ENCODE measurements at regions of chr6 and their contacts with region 1.

Region 1: DNA sequence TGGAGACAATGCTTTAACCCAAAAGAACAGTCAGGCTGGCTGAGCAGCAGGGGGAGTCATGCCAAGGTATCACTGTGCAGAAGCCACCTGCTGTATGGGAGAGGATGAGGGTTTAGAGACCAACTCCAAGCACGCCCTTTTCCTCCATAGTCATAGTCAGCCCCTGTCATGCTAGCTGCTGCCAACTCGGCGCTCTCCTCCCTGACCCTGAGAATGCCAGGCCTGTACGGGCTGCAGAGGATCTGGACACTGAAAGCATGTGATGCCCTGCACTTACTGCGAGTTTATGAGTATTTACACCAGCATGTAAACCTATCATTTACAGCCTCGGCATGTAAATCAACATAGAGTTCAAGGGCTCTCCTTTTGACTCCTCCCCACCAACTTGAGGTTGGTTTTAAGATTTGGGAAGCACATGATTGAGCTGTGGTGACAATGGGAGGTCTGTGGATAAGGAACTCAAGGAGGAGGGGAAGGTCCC is 11.7 kb upstream of the SCUBE3 start:
- DNase-seq: no peak
- ATAC-seq: no peak
- H3K4me3 ChIP-seq: no peak overlapping the region
- H3K4me3 Mint-ChIP-seq: no peak overlapping the region
- H3K27ac ChIP-seq: no peak overlapping the region
- H3K27ac Mint-ChIP-seq: no peak overlapping the region
- H3K4me1 ChIP-seq: no peaks in the 10 kb centered on the region
- H3K4me1 Mint-ChIP-seq: no peaks in the 10 kb centered on the region
- H3K27me3 ChIP-seq: no peaks in the 10 kb centered on the region
- H3K27me3 Mint-ChIP-seq: peaks cover 38 to 58% (median 52%) of the 10 kb centered on the region in 5 donors

Region 2: DNA sequence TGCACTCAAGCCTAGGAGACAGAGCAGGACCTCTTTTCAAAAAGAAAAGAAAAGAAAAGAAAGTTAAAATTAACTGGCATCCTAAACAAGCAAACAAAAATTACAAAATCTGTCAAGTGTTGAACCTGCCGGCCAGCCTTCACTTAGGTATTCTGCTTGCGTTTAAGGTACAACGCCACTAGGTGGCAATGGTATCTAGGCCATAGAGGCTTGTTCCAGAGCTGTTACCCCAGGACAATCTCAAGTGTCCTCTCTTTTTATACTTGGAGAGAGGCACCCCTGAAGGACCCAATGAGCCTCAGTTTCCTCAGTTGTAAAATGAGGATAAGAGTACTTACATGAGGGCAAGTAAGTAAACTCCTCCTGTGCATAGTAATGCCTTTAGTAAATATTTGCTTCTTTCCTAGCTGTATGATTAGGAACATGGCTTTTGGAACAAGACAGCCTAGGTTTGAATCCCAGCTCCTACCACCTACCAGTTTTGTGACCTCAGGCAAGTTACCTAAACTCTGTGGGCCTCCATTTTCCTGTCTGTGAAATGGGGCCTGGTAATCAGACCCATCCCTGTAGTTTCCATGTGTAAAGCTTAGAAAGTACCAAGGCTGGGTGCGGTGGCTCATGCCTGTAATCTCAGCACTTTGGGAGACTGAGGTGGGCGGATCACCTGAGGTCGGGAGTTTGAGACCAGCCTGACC is 742.1 kb before region 1 on chr6:
- CTCF ChIA-PET with region 1: interaction called, 7 read pairs
- POLR2A ChIA-PET with region 1: no interaction called
- intact Hi-C with region 1: loop called in 1 of 2 experiments (anchors 1 kb)
- DNase-seq: peak in 8 of 9 donors; percentile 23 to 55 (median 50)
- ATAC-seq: peak; percentile 82
- H3K4me3 ChIP-seq: no peak overlapping the region
- H3K4me3 Mint-ChIP-seq: no peak overlapping the region
- H3K27ac ChIP-seq: no peak overlapping the region
- H3K27ac Mint-ChIP-seq: no peak overlapping the region
- H3K4me1 ChIP-seq: no peaks in the 10 kb centered on the region
- H3K4me1 Mint-ChIP-seq: peaks cover 0 to 2% (median under 1%) of the 10 kb centered on the region in 7 donors
- H3K27me3 ChIP-seq: no peaks in the 10 kb centered on the region
- H3K27me3 Mint-ChIP-seq: peaks cover 4 to 24% (median 17%) of the 10 kb centered on the region in 5 donors

Region 3: DNA sequence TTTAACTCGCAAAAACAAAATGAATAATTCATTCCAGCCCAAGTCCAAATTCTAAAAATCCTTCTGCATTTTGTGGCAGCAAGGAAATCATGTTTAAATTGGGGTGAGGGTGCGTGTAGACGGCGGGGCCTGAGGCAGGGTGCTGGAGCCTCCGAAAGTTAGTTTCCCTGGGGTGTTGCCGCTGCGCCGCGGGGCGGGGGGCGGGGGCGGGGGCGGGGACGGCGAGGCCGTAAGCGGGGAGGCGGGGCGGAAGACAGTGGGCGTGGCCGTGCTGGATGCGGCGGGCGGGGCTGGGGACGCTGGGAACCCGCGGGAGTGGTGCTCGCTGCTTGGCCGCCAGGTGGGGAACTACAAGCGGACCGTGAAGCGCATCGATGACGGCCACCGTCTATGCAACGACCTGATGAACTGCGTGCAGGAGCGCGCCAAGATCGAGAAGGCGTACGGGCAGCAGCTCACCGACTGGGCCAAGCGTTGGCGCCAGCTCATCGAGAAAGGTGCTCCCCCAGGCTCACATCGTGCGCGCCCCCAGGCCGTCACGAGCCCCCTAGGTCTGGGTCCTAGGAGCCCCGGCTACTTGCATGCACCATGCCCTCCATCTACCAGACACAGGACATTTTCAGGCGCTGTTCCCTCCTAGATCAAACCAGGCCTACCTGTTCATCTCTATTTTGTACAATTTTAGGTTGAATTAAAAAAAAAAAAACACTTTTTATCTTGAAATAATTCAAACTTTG is 674.9 kb before region 1 on chr6:
- CTCF ChIA-PET with region 1: no interaction called
- POLR2A ChIA-PET with region 1: no interaction called
- intact Hi-C with region 1: loop called in 1 of 2 experiments (anchors 2 kb)
- DNase-seq: peak; percentile 88 to 96 (median 94)
- ATAC-seq: peak; percentile 100
- H3K4me3 ChIP-seq: peak overlapping the region; percentile 33
- H3K4me3 Mint-ChIP-seq: peak overlapping the region; percentile 20 to 69 (median 46)
- H3K27ac ChIP-seq: peak overlapping the region; percentile 70
- H3K27ac Mint-ChIP-seq: peak overlapping the region; percentile 12 to 89 (median 72)
- H3K4me1 ChIP-seq: peaks cover 7 to 14% of the 10 kb centered on the region in 2 donors
- H3K4me1 Mint-ChIP-seq: peaks cover 4 to 12% (median 8%) of the 10 kb centered on the region in 7 donors
- H3K27me3 ChIP-seq: no peaks in the 10 kb centered on the region
- H3K27me3 Mint-ChIP-seq: peaks cover 0 to 2% (median 0%) of the 10 kb centered on the region in 5 donors

Region 4: GRCh38 chr6:34986845-34987246 is 215.3 kb before region 1 on chr6:
- CTCF ChIA-PET with region 1: no interaction called
- POLR2A ChIA-PET with region 1: no interaction called
- intact Hi-C with region 1: loop called (anchors 1 kb)
- DNase-seq: peak; percentile 23 to 72 (median 59)
- ATAC-seq: peak; percentile 72
- H3K4me3 ChIP-seq: no peak overlapping the region
- H3K4me3 Mint-ChIP-seq: no peak overlapping the region
- H3K27ac ChIP-seq: no peak overlapping the region
- H3K27ac Mint-ChIP-seq: no peak overlapping the region
- H3K4me1 ChIP-seq: no peaks in the 10 kb centered on the region
- H3K4me1 Mint-ChIP-seq: no peaks in the 10 kb centered on the region
- H3K27me3 ChIP-seq: no peaks in the 10 kb centered on the region
- H3K27me3 Mint-ChIP-seq: no peaks in the 10 kb centered on the region

Region 5: GRCh38 chr6:35146453-35146852 is 55.7 kb before region 1 on chr6:
- CTCF ChIA-PET with region 1: no interaction called
- POLR2A ChIA-PET with region 1: no interaction called
- intact Hi-C with region 1: loop called in 1 of 2 experiments (anchors 2 kb)
- DNase-seq: peak in 1 of 9 donors; percentile 37
- ATAC-seq: no peak
- H3K4me3 ChIP-seq: no peak overlapping the region
- H3K4me3 Mint-ChIP-seq: no peak overlapping the region
- H3K27ac ChIP-seq: no peak overlapping the region
- H3K27ac Mint-ChIP-seq: no peak overlapping the region
- H3K4me1 ChIP-seq: no peaks in the 10 kb centered on the region
- H3K4me1 Mint-ChIP-seq: peaks cover 3 to 37% (median 5%) of the 10 kb centered on the region in 7 donors
- H3K27me3 ChIP-seq: no peaks in the 10 kb centered on the region
- H3K27me3 Mint-ChIP-seq: peaks cover 0 to 9% (median 5%) of the 10 kb centered on the region in 5 donors